ENCODE measurements at regions of chr5 and their contacts with region 1.

Region 1: GRCh38 chr5:173615884-173616576 is 420 bp downstream of the BOD1 start:
- DNase-seq: peak; percentile 78
- H3K4me3 Mint-ChIP-seq: peak overlapping the region; percentile 97
- H3K27ac Mint-ChIP-seq: peak overlapping the region; percentile 96
- H3K4me1 Mint-ChIP-seq: peaks cover 48% of the 10 kb centered on the region
- H3K27me3 Mint-ChIP-seq: no peaks in the 10 kb centered on the region
- CTCF ChIP-seq: peak; percentile 64

Region 2: GRCh38 chr5:173320259-173320658 is 295.8 kb before region 1 on chr5:
- CTCF ChIA-PET with region 1: no interaction called
- intact Hi-C with region 1: no loop called
- DNase-seq: no peak
- H3K4me3 Mint-ChIP-seq: no peak overlapping the region
- H3K27ac Mint-ChIP-seq: no peak overlapping the region
- H3K4me1 Mint-ChIP-seq: peaks cover 15% of the 10 kb centered on the region
- H3K27me3 Mint-ChIP-seq: no peaks in the 10 kb centered on the region
- CTCF ChIP-seq: no peak

Region 3: GRCh38 chr5:173331956-173332479 is 284.0 kb before region 1 on chr5:
- CTCF ChIA-PET with region 1: interaction called, 12 read pairs
- intact Hi-C with region 1: no loop called
- DNase-seq: peak; percentile 86
- H3K4me3 Mint-ChIP-seq: no peak overlapping the region
- H3K27ac Mint-ChIP-seq: peak overlapping the region; percentile 6
- H3K4me1 Mint-ChIP-seq: peaks cover 14% of the 10 kb centered on the region
- H3K27me3 Mint-ChIP-seq: no peaks in the 10 kb centered on the region
- CTCF ChIP-seq: peak; percentile 86

Region 4: GRCh38 chr5:173597304-173597703 is 18.7 kb before region 1 on chr5:
- CTCF ChIA-PET with region 1: no interaction called
- intact Hi-C with region 1: no loop called
- DNase-seq: no peak
- H3K4me3 Mint-ChIP-seq: no peak overlapping the region
- H3K27ac Mint-ChIP-seq: no peak overlapping the region
- H3K4me1 Mint-ChIP-seq: no peaks in the 10 kb centered on the region
- H3K27me3 Mint-ChIP-seq: no peaks in the 10 kb centered on the region
- CTCF ChIP-seq: no peak

Region 5: DNA sequence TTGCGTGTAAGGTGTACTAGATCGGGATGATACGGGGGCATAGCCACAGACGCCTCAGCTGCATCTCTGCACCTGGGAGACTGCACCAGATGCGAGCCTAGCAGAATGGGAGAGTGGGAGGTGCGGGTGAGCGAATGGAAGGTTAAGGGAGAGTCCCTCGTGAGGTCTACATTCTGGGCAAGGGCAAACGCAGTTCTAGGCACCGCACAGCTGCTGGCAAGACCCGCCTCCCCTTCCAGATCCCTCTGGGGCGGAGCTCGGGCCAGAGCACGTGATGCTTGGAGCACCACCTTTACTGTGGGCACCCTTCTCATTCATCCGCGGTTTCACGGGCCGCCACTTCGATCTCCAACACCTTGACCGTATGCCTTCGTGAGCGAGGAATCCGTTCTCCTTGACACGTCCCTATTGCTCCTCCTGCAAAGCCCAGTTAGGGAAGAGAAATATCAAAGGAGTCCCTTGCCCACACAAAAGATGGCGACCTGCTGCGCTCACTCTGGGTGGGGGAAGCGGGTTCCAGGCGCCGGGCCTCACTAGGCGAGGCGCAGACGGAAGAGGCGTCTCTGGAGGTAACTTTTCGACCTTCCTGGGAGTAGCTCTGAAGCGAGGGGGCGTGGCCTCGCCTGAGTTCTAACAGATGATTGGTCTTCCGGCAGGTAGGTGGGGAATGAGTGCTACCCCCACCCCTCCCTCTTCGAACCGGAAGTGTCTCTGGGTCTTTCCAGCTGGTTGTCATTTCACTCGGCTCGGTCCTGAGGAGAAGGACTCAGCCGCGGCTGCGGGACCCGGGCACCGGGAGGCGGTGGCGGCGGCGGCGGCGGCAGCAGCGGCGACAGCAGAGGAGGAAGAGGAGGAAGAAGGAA is 271.8 kb after region 1 on chr5 and contains the start of gene CPEB4:
- CTCF ChIA-PET with region 1: interaction called, 3 read pairs
- intact Hi-C with region 1: loop called (anchors 5 kb)
- DNase-seq: peak; percentile 99
- H3K4me3 Mint-ChIP-seq: peak within 1 kb of the TSS; percentile 90
- H3K27ac Mint-ChIP-seq: peak within 1 kb of the TSS; percentile 100
- H3K4me1 Mint-ChIP-seq: peaks cover 74% of the 10 kb centered on the region
- H3K27me3 Mint-ChIP-seq: no peaks in the 10 kb centered on the region
- CTCF ChIP-seq: no peak
- total RNA-seq, gene CPEB4: 30.8 and 32.0 TPM in 2 replicates

Region 6: DNA sequence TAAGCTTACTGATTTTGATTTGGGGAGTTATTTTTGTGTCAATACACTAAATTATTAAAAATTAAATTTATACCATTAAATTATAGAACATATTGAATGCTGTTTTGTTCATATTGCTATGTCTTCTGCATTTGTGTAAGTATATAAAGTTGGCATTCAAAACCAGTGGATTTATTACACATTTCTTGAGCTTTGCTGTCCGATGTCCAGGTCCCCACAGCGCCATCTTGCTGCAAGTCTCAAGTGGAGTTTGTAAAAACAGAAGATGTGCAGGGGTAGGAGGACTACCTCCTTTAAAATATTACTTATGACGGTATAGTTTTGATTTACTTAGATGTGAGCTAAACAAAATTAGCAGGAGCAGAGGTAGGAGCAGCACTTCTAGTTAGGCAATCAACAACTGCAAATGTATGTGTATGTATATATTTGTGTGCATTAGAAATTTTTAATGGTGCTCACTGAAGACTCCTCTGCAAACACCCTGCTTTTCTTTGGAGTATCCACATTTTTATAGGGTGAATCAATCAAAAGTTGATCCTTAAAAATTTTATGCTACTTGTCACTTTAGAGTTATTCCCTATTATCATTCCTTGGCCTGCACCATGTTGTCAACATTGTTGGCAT is 309.5 kb after region 1 on chr5:
- CTCF ChIA-PET with region 1: interaction called, 9 read pairs
- intact Hi-C with region 1: loop called (anchors 1 kb)
- DNase-seq: peak; percentile 69
- H3K4me3 Mint-ChIP-seq: no peak overlapping the region
- H3K27ac Mint-ChIP-seq: no peak overlapping the region
- H3K4me1 Mint-ChIP-seq: peaks cover 37% of the 10 kb centered on the region
- H3K27me3 Mint-ChIP-seq: no peaks in the 10 kb centered on the region
- CTCF ChIP-seq: peak; percentile 61

Region 7: GRCh38 chr5:173984218-173984617 is 368.2 kb after region 1 on chr5:
- CTCF ChIA-PET with region 1: interaction called, 4 read pairs
- intact Hi-C with region 1: loop called (anchors 1 kb)
- DNase-seq: peak; percentile 34
- H3K4me3 Mint-ChIP-seq: no peak overlapping the region
- H3K27ac Mint-ChIP-seq: no peak overlapping the region
- H3K4me1 Mint-ChIP-seq: no peaks in the 10 kb centered on the region
- H3K27me3 Mint-ChIP-seq: peaks cover 56% of the 10 kb centered on the region
- CTCF ChIP-seq: peak; percentile 51